Naive thymus-derived CD8-positive, alpha-beta T cell (primary cell): ENCODE measurements at regions of chr9 and their contacts with region 1.

Region 1: GRCh38 chr9:33167046-33167808 is at the start of gene B4GALT1:
- DNase-seq: peak; percentile 86 to 99 (median 93)
- ATAC-seq: peak; percentile 81 to 82
- H3K4me3 Mint-ChIP-seq: peak within 1 kb of the TSS; percentile 89 to 99 (median 96)
- H3K27ac Mint-ChIP-seq: peak within 1 kb of the TSS; percentile 94 to 100 (median 99)
- H3K4me1 Mint-ChIP-seq: peaks cover 42 to 70% (median 63%) of the 10 kb centered on the region in 4 donors
- H3K27me3 Mint-ChIP-seq: no peaks in the 10 kb centered on the region
- polyA plus RNA-seq, gene B4GALT1: 15.1 to 24.2 (median 18.6) TPM

Region 2: GRCh38 chr9:33076358-33077004 is 90.7 kb before region 1 on chr9 and contains the start of gene SMU1:
- POLR2A ChIA-PET with region 1: interaction called, 11 read pairs
- DNase-seq: peak; percentile 85 to 98 (median 96)
- ATAC-seq: peak; percentile 92 to 95
- H3K4me3 Mint-ChIP-seq: peak within 1 kb of the TSS; percentile 92 to 100 (median 99)
- H3K27ac Mint-ChIP-seq: peak within 1 kb of the TSS; percentile 96 to 100 (median 100)
- H3K4me1 Mint-ChIP-seq: peaks cover 18 to 52% (median 44%) of the 10 kb centered on the region in 4 donors
- H3K27me3 Mint-ChIP-seq: peaks cover 0 to 2% (median 0%) of the 10 kb centered on the region in 5 donors
- polyA plus RNA-seq, gene SMU1: 19.5 to 24.3 (median 23.7) TPM

Region 3: GRCh38 chr9:33139421-33140228 is 27.6 kb before region 1 on chr9:
- POLR2A ChIA-PET with region 1: interaction called, 63 read pairs
- DNase-seq: no peak
- ATAC-seq: no peak
- H3K4me3 Mint-ChIP-seq: peak overlapping the region in 9 of 10 donors; percentile 33 to 78 (median 61)
- H3K27ac Mint-ChIP-seq: peak overlapping the region; percentile 86 to 99 (median 91)
- H3K4me1 Mint-ChIP-seq: peaks cover 51 to 98% (median 96%) of the 10 kb centered on the region in 4 donors
- H3K27me3 Mint-ChIP-seq: no peaks in the 10 kb centered on the region

Region 4: DNA sequence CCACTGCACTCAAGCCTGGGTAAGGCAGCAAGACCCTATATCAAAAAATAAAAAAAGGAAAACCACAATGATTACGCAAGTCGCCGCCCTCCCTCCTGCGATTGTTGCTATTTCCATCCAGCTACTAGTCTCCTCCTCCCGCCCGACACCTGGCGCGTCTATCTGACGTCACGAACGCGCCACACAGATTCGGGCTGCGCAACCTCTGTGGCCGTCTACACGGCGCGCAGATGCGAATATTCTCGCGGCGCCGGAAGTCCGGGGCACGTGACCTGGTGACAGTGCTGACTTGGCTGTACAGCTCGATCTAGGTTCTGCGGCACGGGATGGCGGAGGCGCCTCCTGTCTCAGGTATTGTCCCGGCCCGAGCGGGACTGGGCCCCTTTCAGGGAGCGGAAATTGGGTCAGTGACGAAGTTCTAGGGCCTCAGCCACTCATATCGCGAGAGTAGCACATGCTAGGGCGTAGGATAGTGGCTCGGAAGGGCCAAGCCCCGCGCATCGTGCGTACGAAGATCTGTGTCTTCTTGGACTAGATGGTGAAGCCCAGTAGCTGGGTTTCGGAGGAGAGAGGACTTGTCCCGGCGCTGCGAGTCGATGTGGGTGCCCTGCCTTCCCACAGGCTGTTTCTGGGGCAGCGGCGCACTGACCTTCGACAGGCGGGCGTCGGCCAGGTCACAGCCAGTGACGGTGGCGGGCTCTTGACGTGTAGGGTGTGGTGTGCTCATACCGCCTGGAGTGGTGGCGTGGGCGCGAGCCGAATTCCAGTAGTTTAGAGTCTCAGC is 123.2 kb after region 1 on chr9 and contains the start of gene NFX1:
- POLR2A ChIA-PET with region 1: interaction called, 20 read pairs
- DNase-seq: peak; percentile 93 to 100 (median 99)
- ATAC-seq: peak; percentile 84 to 85
- H3K4me3 Mint-ChIP-seq: peak within 1 kb of the TSS; percentile 82 to 99 (median 95)
- H3K27ac Mint-ChIP-seq: peak within 1 kb of the TSS; percentile 97 to 100 (median 99)
- H3K4me1 Mint-ChIP-seq: peaks cover 27 to 72% (median 63%) of the 10 kb centered on the region in 4 donors
- H3K27me3 Mint-ChIP-seq: peaks cover 0 to 2% (median 0%) of the 10 kb centered on the region in 5 donors
- polyA plus RNA-seq, gene NFX1: 22.8 to 42.7 (median 31.6) TPM

Region 5: DNA sequence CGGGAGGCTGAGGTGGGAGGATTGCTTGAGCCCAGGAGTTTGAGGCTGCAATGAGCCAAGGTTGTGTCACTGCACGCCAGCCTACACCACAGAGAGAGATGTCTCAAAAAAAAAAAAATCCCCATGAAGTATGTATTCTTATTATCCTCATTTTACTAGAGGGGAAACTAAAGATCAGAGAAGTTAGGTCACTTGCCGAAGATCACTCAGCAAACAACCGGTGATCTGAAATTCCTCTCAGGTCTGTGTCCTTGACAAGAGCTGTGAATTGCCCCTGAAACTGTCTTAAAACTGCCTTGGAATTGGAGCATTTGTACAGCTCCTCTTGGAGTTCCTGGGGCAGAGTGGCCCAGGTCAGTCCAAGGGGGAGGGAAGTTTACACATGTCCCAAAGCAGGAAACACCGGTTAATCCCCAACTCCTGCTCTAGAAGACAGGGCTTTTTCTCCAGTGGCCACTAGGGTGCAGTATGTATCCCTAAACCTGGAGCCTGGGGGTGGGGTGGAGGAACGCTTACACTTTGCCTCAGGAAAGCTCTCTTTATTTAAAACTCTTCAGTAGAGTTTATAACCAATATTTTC is 207.5 kb after region 1 on chr9:
- POLR2A ChIA-PET with region 1: no interaction called
- DNase-seq: peak; percentile 36 to 84 (median 63)
- ATAC-seq: peak; percentile 93 to 95
- H3K4me3 Mint-ChIP-seq: peak overlapping the region; percentile 27 to 80 (median 66)
- H3K27ac Mint-ChIP-seq: peak overlapping the region in 9 of 10 donors; percentile 9 to 90 (median 53)
- H3K4me1 Mint-ChIP-seq: peaks cover 7 to 15% (median 11%) of the 10 kb centered on the region in 4 donors
- H3K27me3 Mint-ChIP-seq: no peaks in the 10 kb centered on the region